ENCODE measurements at regions of chr1 and their contacts with region 1.

Region 1: GRCh38 chr1:32773018-32773763 is 44.0 kb downstream of the YARS1 start:
- DNase-seq: peak; percentile 90
- ATAC-seq: peak; percentile 72
- H3K4me3 Mint-ChIP-seq: no peak overlapping the region
- H3K27ac Mint-ChIP-seq: peak overlapping the region; percentile 90
- H3K4me1 Mint-ChIP-seq: peaks cover 28% of the 10 kb centered on the region
- H3K27me3 Mint-ChIP-seq: no peaks in the 10 kb centered on the region
- CTCF ChIP-seq: peak; percentile 91

Region 2: DNA sequence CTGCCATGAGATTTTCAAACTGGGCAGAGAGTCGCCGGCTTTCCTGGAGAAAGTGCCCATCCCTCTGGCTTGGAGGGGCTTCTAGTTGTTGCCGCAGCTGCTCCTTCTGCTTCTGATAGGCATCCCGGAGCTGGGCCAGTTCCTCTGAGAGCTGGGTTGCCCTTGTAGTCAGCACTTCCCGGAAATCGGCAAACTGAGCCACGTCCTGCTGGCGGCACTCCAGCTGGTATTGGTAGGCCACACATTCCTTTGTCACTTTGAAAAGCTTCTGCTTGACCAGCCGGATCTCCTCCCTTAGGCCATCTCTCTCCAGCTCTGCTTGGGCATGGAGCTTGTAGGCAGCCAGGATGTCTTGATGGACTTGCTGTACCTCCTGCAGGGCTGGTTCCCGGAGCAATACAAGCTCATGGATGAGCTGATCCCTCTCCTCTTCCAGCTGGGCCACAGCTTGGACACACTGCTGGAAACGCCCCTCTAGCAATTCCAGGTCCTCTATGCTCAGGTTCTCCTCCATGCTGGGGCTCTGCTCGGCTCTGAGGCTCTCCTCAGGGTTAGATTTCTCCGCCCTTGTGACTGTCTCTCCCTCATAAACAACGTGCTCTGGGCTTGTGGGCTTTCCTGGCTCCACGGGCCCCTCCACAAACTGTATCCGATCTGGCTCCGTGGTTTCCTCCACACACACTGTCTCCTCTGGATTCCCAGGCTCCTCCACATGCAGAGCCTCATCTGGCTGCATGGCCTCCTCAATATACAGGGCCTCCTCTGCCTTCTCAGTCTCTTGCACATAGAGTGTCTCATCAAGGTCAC is 77.9 kb before region 1 on chr1:
- CTCF ChIA-PET with region 1: interaction called, 11 read pairs
- POLR2A ChIA-PET with region 1: interaction called, 4 read pairs
- DNase-seq: no peak
- ATAC-seq: peak; percentile 32
- H3K4me3 Mint-ChIP-seq: no peak overlapping the region
- H3K27ac Mint-ChIP-seq: no peak overlapping the region
- H3K4me1 Mint-ChIP-seq: peaks cover 5% of the 10 kb centered on the region
- H3K27me3 Mint-ChIP-seq: peaks cover 2% of the 10 kb centered on the region
- CTCF ChIP-seq: no peak

Region 3: DNA sequence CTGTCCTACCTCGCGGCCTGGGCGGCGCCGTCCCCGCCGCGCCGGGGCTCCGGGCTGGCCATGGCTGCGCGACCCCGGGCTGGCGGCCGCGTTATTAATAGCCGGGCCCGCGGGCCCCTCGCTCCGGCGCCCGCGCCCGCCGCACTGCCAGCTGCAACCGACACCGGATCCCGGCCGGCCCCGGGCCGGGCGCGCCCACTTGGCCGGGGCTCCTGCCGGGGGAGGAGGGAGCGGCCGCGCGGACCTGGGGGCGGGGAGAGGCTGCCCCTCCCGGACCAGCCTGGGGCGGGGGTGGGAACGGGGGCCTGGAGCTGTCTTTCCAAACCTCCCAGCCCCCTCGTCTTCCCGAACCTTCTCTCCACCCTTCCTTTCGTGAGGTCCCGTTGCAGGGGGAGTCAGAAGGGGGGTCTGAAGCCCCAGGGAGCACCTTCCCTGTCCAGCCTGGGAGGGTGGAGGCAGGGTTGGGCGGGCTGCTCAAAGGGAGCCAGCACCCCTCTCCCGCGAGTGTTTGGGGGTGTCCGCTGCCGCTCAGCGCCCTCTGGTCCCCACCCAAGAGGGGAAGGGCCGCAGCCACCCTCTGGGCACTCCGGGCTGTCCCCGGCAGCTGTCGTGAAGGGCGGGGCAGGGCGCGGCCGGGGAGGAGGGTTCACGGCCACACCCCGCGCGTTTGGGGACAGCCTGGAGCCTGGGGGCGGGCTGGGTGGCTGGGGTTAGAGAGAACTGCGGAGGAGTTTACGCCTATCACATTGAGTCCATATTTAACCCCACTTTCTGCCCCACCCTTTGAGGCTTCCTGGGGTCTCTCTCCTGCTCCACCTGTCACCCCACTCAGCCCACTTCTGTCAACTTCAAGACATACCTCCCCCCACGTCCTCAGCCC is 70.4 kb before region 1 on chr1 and contains the start of gene SYNC:
- CTCF ChIA-PET with region 1: interaction called, 262 read pairs
- POLR2A ChIA-PET with region 1: interaction called, 6 read pairs
- DNase-seq: no peak
- ATAC-seq: peak; percentile 26
- H3K4me3 Mint-ChIP-seq: peak within 1 kb of the TSS; percentile 70
- H3K27ac Mint-ChIP-seq: no peak within 1 kb of the TSS
- H3K4me1 Mint-ChIP-seq: peaks cover 13% of the 10 kb centered on the region
- H3K27me3 Mint-ChIP-seq: peaks cover 59% of the 10 kb centered on the region
- CTCF ChIP-seq: no peak
- total RNA-seq, gene SYNC: 0.09 to 0.21 TPM (median 0.11 TPM) in 3 replicates

Region 4: GRCh38 chr1:32709075-32709474 is 64.1 kb before region 1 on chr1:
- CTCF ChIA-PET with region 1: interaction called, 262 read pairs
- POLR2A ChIA-PET with region 1: interaction called, 39 read pairs
- DNase-seq: no peak
- ATAC-seq: no peak
- H3K4me3 Mint-ChIP-seq: no peak overlapping the region
- H3K27ac Mint-ChIP-seq: no peak overlapping the region
- H3K4me1 Mint-ChIP-seq: peaks cover 12% of the 10 kb centered on the region
- H3K27me3 Mint-ChIP-seq: peaks cover 30% of the 10 kb centered on the region
- CTCF ChIP-seq: no peak

Region 5: GRCh38 chr1:32733582-32734321 is 39.4 kb before region 1 on chr1:
- CTCF ChIA-PET with region 1: interaction called, 18 read pairs
- POLR2A ChIA-PET with region 1: interaction called, 5 read pairs
- DNase-seq: peak; percentile 49
- ATAC-seq: no peak
- H3K4me3 Mint-ChIP-seq: no peak overlapping the region
- H3K27ac Mint-ChIP-seq: no peak overlapping the region
- H3K4me1 Mint-ChIP-seq: peaks cover 18% of the 10 kb centered on the region
- H3K27me3 Mint-ChIP-seq: peaks cover 25% of the 10 kb centered on the region
- CTCF ChIP-seq: no peak

Region 6: GRCh38 chr1:32753532-32754312 is 19.5 kb before region 1 on chr1:
- CTCF ChIA-PET with region 1: interaction called, 89 read pairs
- POLR2A ChIA-PET with region 1: interaction called, 16 read pairs
- DNase-seq: peak; percentile 89
- ATAC-seq: peak; percentile 83
- H3K4me3 Mint-ChIP-seq: peak overlapping the region; percentile 92
- H3K27ac Mint-ChIP-seq: peak overlapping the region; percentile 92
- H3K4me1 Mint-ChIP-seq: peaks cover 45% of the 10 kb centered on the region
- H3K27me3 Mint-ChIP-seq: no peaks in the 10 kb centered on the region
- CTCF ChIP-seq: no peak

Region 7: DNA sequence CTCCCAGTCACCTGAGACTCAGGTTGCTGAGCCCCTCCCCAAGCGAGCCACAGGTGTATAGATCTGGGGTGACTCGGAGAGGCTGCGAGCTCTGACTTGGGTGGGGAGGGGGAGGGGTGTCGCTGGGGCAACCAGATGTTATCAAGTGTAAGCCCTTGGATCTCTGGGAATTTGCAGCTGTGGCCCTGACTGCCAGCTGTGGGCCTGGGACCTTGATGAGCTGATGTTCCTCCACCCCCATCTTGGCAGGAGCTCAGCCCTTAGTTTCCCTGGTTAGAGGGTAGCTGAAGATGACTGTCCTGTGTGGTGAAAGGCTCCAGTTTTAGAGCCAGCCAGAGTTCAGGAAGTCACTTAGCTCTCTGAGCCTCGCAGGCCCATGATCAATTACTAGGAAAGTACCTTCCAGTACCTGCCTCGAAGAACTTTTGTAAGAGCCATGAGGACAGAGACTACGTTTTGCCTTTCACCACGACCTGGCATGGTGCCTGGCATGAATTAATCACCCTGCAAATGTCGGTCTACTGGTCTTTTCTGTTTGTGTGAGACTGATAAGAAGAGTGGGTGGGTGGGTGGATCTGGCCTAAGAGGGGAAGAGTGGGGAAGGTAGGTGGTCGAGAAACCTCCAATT is 11.8 kb before region 1 on chr1:
- CTCF ChIA-PET with region 1: interaction called, 89 read pairs
- POLR2A ChIA-PET with region 1: interaction called, 16 read pairs
- DNase-seq: peak; percentile 50
- ATAC-seq: peak; percentile 2
- H3K4me3 Mint-ChIP-seq: peak overlapping the region; percentile 54
- H3K27ac Mint-ChIP-seq: peak overlapping the region; percentile 100
- H3K4me1 Mint-ChIP-seq: peaks cover 84% of the 10 kb centered on the region
- H3K27me3 Mint-ChIP-seq: no peaks in the 10 kb centered on the region
- CTCF ChIP-seq: no peak

Measured in WTC11 (cell line).